Endothelial cell of umbilical vein (primary cell): ENCODE measurements at regions of chr5 and their contacts with region 1.

Region 1: DNA sequence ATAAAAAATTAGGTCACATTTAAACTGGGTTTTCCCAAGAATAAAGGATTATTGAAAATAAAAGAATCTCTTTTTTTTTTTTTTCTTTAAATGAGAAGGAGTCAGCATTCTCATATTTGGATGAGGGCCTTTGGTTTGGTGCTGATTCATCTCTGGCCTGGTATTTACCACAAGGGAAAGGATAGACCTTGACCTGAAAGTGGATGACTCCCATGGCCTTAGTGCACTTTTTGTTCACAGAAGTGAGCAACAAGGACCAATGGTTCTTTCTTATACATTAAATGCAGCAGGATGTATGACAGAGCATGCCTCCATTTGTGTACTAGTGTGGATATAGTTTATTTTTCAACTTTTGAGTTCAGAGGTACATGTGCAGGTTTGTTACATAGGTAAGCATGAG is 6.9 kb downstream of the YTHDC2 start:
- DNase-seq: no peak
- H3K4me3 ChIP-seq: no peak overlapping the region
- H3K27ac ChIP-seq: no peak overlapping the region
- H3K4me1 ChIP-seq: peaks cover 15% of the 10 kb centered on the region
- H3K27me3 ChIP-seq: no peaks in the 10 kb centered on the region
- CTCF ChIP-seq: no peak
- POLR2A ChIP-seq: no peak

Region 2: GRCh38 chr5:115522832-115523403 is 2002.5 kb after region 1 on chr5:
- CTCF ChIA-PET with region 1: no interaction called
- POLR2A ChIA-PET with region 1: no interaction called
- dilution Hi-C with region 1: no loop called
- intact Hi-C with region 1: loop called (anchors 10 kb)
- DNase-seq: no peak
- H3K4me3 ChIP-seq: no peak overlapping the region
- H3K27ac ChIP-seq: no peak overlapping the region
- H3K4me1 ChIP-seq: no peaks in the 10 kb centered on the region
- H3K27me3 ChIP-seq: no peaks in the 10 kb centered on the region
- CTCF ChIP-seq: no peak
- POLR2A ChIP-seq: no peak